Naive thymus-derived CD8-positive, alpha-beta T cell (primary cell): ENCODE measurements at regions of chr11 and their contacts with region 1.

Region 1: DNA sequence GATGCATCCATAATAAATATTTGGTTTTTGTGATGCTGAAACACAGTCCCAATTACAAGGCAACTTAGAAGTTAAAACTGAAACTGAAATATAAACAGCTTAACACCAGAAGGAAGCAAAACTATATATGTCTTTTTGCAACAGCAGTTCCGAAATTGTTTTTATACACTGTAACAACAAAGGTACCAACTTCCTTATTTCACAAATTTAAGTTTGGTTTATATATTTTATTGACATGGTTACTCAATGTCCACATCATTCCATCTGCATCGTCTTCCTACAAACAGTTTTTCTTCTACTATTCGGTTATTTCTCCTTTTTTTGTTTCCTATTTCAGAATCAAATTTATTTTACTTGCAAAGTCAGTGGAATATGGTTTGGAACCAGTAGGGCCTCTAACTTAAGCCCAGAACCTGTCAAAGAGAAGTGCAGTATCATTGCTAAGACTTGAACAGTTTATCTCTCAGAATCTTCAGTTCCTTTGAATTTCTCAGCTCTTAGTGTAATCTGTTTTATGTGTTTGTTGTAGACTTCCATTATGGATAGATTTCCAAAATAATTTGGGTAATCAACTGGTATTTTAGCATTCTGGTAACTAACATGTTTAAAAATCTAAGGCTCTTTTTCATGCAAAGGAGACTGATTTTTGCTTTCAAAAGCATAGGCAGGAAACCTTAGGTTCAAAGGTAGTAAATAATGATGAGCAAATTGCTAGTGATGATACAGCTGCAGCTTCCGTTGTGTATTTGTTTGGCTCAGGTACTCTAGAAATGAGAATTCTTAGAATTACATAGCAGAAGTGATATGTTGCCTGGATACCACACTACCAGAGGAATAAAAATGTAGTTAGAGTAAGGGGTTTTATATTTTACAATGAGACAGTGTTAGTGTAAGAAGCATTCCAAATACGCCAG is 8.2 kb upstream of the HSPA8 start:
- DNase-seq: peak in 4 of 10 donors; percentile 38 to 75 (median 58)
- ATAC-seq: peak; percentile 73 to 92
- H3K4me3 Mint-ChIP-seq: peak overlapping the region; percentile 79 to 96 (median 90)
- H3K27ac Mint-ChIP-seq: peak overlapping the region; percentile 91 to 100 (median 96)
- H3K4me1 Mint-ChIP-seq: peaks cover 33 to 64% (median 60%) of the 10 kb centered on the region in 4 donors
- H3K27me3 Mint-ChIP-seq: no peaks in the 10 kb centered on the region

Region 2: DNA sequence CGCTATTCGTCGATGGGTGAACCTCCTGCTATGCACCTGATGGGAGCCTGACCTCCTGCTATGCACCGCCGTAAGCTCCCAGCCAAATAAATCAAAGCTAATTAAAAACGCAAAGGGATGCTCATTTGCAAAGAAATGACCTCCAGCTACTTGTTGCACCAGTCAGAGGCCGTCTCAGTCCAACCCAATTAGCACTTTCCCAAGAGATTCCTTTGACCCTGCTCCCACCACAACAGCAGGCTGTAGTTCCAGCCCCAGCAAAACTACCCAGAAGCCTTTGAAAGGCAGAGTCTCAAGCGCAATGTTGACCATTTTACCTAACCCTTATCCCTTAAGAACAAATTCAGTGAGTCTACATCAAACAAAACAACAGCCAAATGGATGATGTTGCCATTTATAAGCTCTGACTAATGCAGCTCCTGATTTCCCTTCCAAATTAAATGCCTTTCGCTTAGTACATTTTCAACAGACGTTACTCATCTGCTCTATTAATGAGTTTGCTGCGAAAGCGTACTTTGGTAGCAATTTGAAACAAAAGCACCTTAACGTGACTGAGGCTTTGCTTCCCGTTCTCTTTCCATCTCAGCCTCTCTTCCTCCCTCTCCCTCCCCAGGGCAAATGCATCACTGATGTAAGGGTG is 71.3 kb before region 1 on chr11:
- POLR2A ChIA-PET with region 1: no interaction called
- DNase-seq: no peak
- ATAC-seq: no peak
- H3K4me3 Mint-ChIP-seq: no peak overlapping the region
- H3K27ac Mint-ChIP-seq: no peak overlapping the region
- H3K4me1 Mint-ChIP-seq: no peaks in the 10 kb centered on the region
- H3K27me3 Mint-ChIP-seq: peaks cover 10 to 53% (median 23%) of the 10 kb centered on the region in 5 donors

Region 3: DNA sequence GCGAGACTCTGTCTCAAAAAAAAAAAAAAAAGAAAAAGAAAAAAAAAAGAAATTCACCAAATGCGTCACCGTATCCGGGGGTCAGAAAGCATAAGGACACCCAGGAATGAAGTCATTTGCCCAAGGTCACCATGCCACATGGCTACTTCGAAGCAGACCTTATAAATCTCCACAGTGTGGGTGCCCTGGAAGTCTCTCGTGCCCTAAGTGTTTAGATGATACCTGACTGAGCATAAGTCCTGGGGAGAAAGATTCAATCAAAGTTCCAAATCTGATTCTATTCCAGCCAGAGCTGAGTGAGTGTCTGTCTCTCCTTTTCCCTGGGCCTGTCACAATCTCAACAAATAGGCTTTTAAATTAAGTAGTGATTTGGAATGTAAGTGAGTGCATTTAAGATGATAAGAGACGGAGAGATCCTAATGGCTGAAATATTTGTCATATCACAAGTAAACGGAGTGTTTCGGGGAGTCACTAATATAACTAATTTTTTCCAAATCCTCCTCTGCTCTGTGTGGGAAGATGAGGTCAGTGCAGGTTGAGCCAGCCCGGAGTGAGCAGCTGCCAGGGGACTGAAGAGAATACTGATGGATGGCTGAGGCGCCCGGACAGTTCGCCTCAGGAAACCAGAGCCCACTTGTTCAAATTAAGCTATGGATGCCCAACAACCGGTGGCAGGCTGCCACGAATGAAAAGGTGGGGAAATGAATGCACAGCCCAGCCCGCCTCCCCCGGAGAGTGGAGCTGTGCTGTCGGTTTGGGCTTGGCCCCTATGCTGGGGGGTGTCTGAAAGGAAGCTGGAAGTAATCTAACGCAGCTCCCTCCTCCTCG is 30.3 kb before region 1 on chr11:
- POLR2A ChIA-PET with region 1: no interaction called
- DNase-seq: no peak
- ATAC-seq: no peak
- H3K4me3 Mint-ChIP-seq: no peak overlapping the region
- H3K27ac Mint-ChIP-seq: no peak overlapping the region
- H3K4me1 Mint-ChIP-seq: no peaks in the 10 kb centered on the region
- H3K27me3 Mint-ChIP-seq: peaks cover 0 to 1% (median 0%) of the 10 kb centered on the region in 5 donors

Region 4: GRCh38 chr11:123054301-123055065 is 15.7 kb before region 1 on chr11:
- POLR2A ChIA-PET with region 1: interaction called, 74 read pairs
- DNase-seq: peak in 5 of 10 donors; percentile 21 to 75 (median 71)
- ATAC-seq: peak; percentile 68 to 92
- H3K4me3 Mint-ChIP-seq: peak overlapping the region; percentile 39 to 100 (median 64)
- H3K27ac Mint-ChIP-seq: peak overlapping the region; percentile 22 to 100 (median 94)
- H3K4me1 Mint-ChIP-seq: peaks cover 31 to 62% (median 58%) of the 10 kb centered on the region in 4 donors
- H3K27me3 Mint-ChIP-seq: no peaks in the 10 kb centered on the region

Region 5: GRCh38 chr11:123083623-123084029 is 13.5 kb after region 1 on chr11:
- POLR2A ChIA-PET with region 1: interaction called, 220 read pairs
- DNase-seq: peak in 1 of 10 donors; percentile 58
- ATAC-seq: no peak
- H3K4me3 Mint-ChIP-seq: peak overlapping the region in 2 of 10 donors; percentile 11 to 39
- H3K27ac Mint-ChIP-seq: peak overlapping the region in 7 of 10 donors; percentile 6 to 80 (median 66)
- H3K4me1 Mint-ChIP-seq: peaks cover 4 to 49% (median 33%) of the 10 kb centered on the region in 4 donors
- H3K27me3 Mint-ChIP-seq: no peaks in the 10 kb centered on the region

Region 6: GRCh38 chr11:123103326-123103980 is 33.3 kb after region 1 on chr11:
- POLR2A ChIA-PET with region 1: interaction called, 16 read pairs
- DNase-seq: peak in 8 of 10 donors; percentile 7 to 65 (median 30)
- ATAC-seq: peak; percentile 65 to 89
- H3K4me3 Mint-ChIP-seq: no peak overlapping the region
- H3K27ac Mint-ChIP-seq: peak overlapping the region in 7 of 10 donors; percentile 8 to 89 (median 49)
- H3K4me1 Mint-ChIP-seq: peaks cover 12 to 27% (median 21%) of the 10 kb centered on the region in 4 donors
- H3K27me3 Mint-ChIP-seq: no peaks in the 10 kb centered on the region

Region 7: GRCh38 chr11:123272565-123272964 is 202.4 kb after region 1 on chr11:
- POLR2A ChIA-PET with region 1: no interaction called
- DNase-seq: no peak
- ATAC-seq: no peak
- H3K4me3 Mint-ChIP-seq: no peak overlapping the region
- H3K27ac Mint-ChIP-seq: no peak overlapping the region
- H3K4me1 Mint-ChIP-seq: peaks cover 0 to 1% (median 0%) of the 10 kb centered on the region in 4 donors
- H3K27me3 Mint-ChIP-seq: peaks cover 0 to 4% (median 1%) of the 10 kb centered on the region in 5 donors